Esophagus muscularis mucosa (tissue), 4 donors: ENCODE measurements at regions of chr4 and their contacts with region 1.

Region 1: DNA sequence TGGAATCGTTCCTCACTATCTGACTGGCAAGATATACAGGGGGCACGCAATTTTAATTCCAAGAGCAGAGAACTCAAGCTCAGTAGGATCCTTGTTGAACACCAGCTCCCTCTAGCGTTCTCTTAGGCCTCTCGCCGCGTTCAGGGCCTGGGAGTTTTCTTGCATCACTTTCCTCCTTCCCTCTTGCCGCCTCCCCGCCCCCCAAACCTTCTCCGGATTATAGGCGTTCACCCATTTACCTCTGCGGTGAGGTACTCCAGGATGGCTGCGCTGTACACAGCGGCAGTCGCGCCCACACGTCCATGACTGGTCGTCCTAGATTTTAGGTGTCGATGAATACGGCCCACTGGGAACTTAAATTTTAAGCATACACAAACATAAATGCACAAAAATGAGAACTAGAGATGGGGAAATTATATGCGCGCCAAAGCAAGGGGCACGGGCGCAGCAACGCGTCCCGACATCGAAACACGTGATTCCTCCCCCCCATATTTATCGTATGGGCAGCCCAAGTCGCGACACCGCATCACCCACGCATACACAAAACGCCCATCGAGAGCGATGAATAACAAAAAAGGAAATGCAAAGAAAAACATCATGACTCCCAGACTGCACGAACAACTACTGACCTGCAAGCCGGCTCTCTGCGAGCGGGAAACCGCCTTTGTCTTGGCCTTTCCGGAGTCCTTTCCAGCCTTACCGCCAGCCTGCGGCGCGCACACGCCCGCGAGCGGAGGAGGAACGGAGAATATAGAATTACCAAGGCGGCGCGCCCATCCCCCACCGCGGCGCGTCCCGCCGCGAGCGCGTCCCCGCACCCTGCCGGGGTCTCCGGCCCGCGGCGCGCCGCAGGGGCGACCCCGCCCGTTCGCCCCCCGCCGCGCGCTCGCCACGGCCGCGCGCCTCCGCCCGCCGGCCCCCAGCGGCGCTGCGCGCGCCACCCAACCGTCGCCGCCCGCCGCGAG is 759 bp downstream of the H2AZ1 start:
- DNase-seq: peak; percentile 96
- H3K4me3 ChIP-seq: peak overlapping the region; percentile 89 to 94 (median 90)
- H3K27ac ChIP-seq: peak overlapping the region; percentile 93 to 98 (median 97)
- H3K4me1 ChIP-seq: peaks cover 44 to 50% (median 45%) of the 10 kb centered on the region in 4 donors
- H3K27me3 ChIP-seq: no peaks in the 10 kb centered on the region
- CTCF ChIP-seq: peak; percentile 84 to 93 (median 88)
- EP300 ChIP-seq: no peak
- POLR2A ChIP-seq: no peak

Region 2: GRCh38 chr4:99563310-99564186 is 385.8 kb before region 1 on chr4 and contains the start of gene TRMT10A:
- intact Hi-C with region 1: loop called (anchors 2 kb)
- DNase-seq: peak; percentile 99
- H3K4me3 ChIP-seq: peak within 1 kb of the TSS; percentile 61 to 81 (median 71)
- H3K27ac ChIP-seq: peak within 1 kb of the TSS; percentile 91 to 94 (median 92)
- H3K4me1 ChIP-seq: peaks cover 8 to 18% (median 10%) of the 10 kb centered on the region in 4 donors
- H3K27me3 ChIP-seq: no peaks in the 10 kb centered on the region
- CTCF ChIP-seq: peak in 1 of 3 experiments; percentile 5
- EP300 ChIP-seq: no peak
- POLR2A ChIP-seq: peak; percentile 43
- total RNA-seq, gene TRMT10A: 3.0 to 5.3 (median 4.8) TPM

Region 3: DNA sequence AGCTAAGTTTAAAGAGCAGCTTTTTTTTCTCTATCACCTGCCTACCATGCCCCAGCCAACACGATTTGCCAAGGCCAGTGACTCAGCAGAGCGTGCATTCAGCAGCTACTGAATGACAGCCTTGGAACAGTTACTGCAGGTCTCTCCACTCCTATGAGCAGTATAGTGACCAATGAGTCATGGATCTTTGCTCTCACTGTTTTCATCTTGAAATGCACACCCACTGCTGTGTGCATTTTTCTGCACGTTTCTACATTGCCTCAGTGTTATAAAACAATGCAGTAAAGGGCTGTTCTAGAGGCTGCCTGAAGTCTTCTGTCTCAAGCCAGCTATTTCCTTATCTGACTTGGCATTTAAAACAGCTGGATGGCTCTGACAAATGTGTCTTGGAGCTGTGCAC is 225.7 kb before region 1 on chr4:
- intact Hi-C with region 1: loop called (anchors 10 kb)
- DNase-seq: no peak
- H3K4me3 ChIP-seq: no peak overlapping the region
- H3K27ac ChIP-seq: peak overlapping the region; percentile 79 to 83 (median 81)
- H3K4me1 ChIP-seq: peaks cover 23 to 54% (median 46%) of the 10 kb centered on the region in 4 donors
- H3K27me3 ChIP-seq: no peaks in the 10 kb centered on the region
- CTCF ChIP-seq: no peak
- EP300 ChIP-seq: no peak
- POLR2A ChIP-seq: no peak

Region 4: GRCh38 chr4:99816545-99817308 is 132.6 kb before region 1 on chr4 and contains the start of gene DAPP1:
- intact Hi-C with region 1: loop called (anchors 5 kb)
- DNase-seq: no peak
- H3K4me3 ChIP-seq: peak within 1 kb of the TSS in 3 of 4 donors; percentile 8 to 45 (median 18)
- H3K27ac ChIP-seq: no peak within 1 kb of the TSS
- H3K4me1 ChIP-seq: peaks cover 0 to 16% (median 9%) of the 10 kb centered on the region in 4 donors
- H3K27me3 ChIP-seq: no peaks in the 10 kb centered on the region
- CTCF ChIP-seq: no peak
- EP300 ChIP-seq: no peak
- POLR2A ChIP-seq: no peak
- total RNA-seq, gene DAPP1: 0.86 to 2.5 (median 1.1) TPM

Region 5: GRCh38 chr4:99894161-99894997 is 54.9 kb before region 1 on chr4 and contains the start of gene LAMTOR3:
- intact Hi-C with region 1: loop called (anchors 2 kb)
- DNase-seq: peak; percentile 97
- H3K4me3 ChIP-seq: peak within 1 kb of the TSS; percentile 89 to 97 (median 92)
- H3K27ac ChIP-seq: peak within 1 kb of the TSS; percentile 84 to 90 (median 89)
- H3K4me1 ChIP-seq: peaks cover 30 to 46% (median 45%) of the 10 kb centered on the region in 4 donors
- H3K27me3 ChIP-seq: no peaks in the 10 kb centered on the region
- CTCF ChIP-seq: no peak
- EP300 ChIP-seq: no peak
- POLR2A ChIP-seq: no peak
- total RNA-seq, gene LAMTOR3: 22.6 to 50.3 (median 44.5) TPM